ENCODE measurements at regions of chr5 and their contacts with region 1.

Region 1: GRCh38 chr5:35857606-35858205 is 1.0 kb downstream of the IL7R start:
- DNase-seq: no peak
- ATAC-seq: no peak
- H3K4me3 Mint-ChIP-seq: peak overlapping the region; percentile 85
- H3K27ac Mint-ChIP-seq: peak overlapping the region; percentile 83
- H3K4me1 Mint-ChIP-seq: peaks cover 86% of the 10 kb centered on the region
- H3K27me3 Mint-ChIP-seq: no peaks in the 10 kb centered on the region

Region 2: DNA sequence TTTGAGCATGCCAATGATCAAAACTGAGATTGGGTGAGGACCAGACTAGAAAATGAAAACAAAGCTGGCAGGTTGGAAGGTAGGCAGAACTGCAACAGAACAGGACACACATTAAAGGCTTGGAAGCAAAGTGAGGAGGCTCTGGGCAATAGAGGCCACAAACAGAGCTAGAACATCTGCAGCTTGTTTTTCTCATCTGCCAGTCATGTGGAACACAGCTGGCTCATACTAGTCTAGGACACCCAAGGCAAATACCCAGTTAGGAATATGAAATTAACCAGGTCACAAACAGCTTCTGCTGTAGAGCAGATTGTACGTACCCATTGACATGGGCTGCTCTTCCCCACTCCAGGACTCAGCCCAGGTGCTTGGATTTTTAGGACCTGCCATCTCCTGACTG is 178.3 kb before region 1 on chr5:
- CTCF ChIA-PET with region 1: no interaction called
- POLR2A ChIA-PET with region 1: no interaction called
- DNase-seq: no peak
- ATAC-seq: peak; percentile 27
- H3K4me3 Mint-ChIP-seq: no peak overlapping the region
- H3K27ac Mint-ChIP-seq: peak overlapping the region; percentile 50
- H3K4me1 Mint-ChIP-seq: peaks cover 24% of the 10 kb centered on the region
- H3K27me3 Mint-ChIP-seq: no peaks in the 10 kb centered on the region

Region 3: DNA sequence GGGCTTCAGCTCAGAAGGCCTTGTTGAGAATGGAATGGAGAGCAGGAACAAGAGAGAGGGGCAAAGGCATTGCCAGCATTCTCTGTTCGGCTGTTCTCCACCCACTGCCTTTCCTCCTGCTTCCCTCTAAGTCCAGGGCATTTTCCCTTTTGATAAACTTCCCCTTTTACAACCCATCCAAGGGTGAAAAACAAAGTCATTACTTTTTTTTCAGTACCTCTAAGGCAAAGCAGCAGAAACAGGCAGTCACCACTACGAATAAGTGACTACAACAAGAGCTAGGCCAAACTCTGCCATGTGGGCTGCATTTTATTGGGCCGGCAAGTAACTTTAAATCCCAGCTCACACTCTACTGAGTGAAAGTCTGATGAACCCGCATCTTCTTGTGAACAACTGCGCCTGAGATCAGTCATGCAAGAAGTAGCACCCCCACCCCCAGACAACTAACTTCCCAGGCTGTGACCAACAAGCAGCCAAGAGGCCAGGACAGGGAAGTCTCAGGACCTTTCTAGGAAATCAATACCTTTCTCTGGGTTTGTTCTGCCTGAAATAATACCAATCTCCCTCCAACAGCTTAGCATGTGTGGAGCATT is 12.1 kb after region 1 on chr5:
- CTCF ChIA-PET with region 1: interaction called, 17 read pairs
- POLR2A ChIA-PET with region 1: interaction called, 17 read pairs
- DNase-seq: no peak
- ATAC-seq: no peak
- H3K4me3 Mint-ChIP-seq: no peak overlapping the region
- H3K27ac Mint-ChIP-seq: peak overlapping the region; percentile 22
- H3K4me1 Mint-ChIP-seq: peaks cover 43% of the 10 kb centered on the region
- H3K27me3 Mint-ChIP-seq: no peaks in the 10 kb centered on the region

Region 4: GRCh38 chr5:36041538-36041846 is 183.8 kb after region 1 on chr5:
- CTCF ChIA-PET with region 1: no interaction called
- POLR2A ChIA-PET with region 1: no interaction called
- DNase-seq: no peak
- ATAC-seq: no peak
- H3K4me3 Mint-ChIP-seq: no peak overlapping the region
- H3K27ac Mint-ChIP-seq: no peak overlapping the region
- H3K4me1 Mint-ChIP-seq: no peaks in the 10 kb centered on the region
- H3K27me3 Mint-ChIP-seq: peaks cover 5% of the 10 kb centered on the region